ENCODE measurements at regions of chr21 and their contacts with region 1.

Region 1: GRCh38 chr21:31604591-31605190 is 54.8 kb upstream of the SOD1 start:
- DNase-seq: peak; percentile 74
- ATAC-seq: peak; percentile 44

Region 2: GRCh38 chr21:31103571-31104272 is 501.0 kb before region 1 on chr21:
- intact Hi-C with region 1: loop called (anchors 5 kb)
- DNase-seq: no peak
- ATAC-seq: no peak

Region 3: GRCh38 chr21:31198575-31198974 is 406.1 kb before region 1 on chr21:
- intact Hi-C with region 1: loop called (anchors 2 kb)
- DNase-seq: no peak
- ATAC-seq: no peak